Tibial artery (tissue), 4 donors: ENCODE measurements at regions of chr4 and their contacts with region 1.

Region 1: GRCh38 chr4:88456757-88457306 is at the start of gene HERC5:
- DNase-seq: peak; percentile 90 to 96
- H3K4me3 ChIP-seq: peak within 1 kb of the TSS; percentile 93 to 97
- H3K27ac ChIP-seq: peak within 1 kb of the TSS; percentile 88 to 90
- H3K4me1 ChIP-seq: peaks cover 0 to 5% (median 2%) of the 10 kb centered on the region in 4 donors
- H3K27me3 ChIP-seq: no peaks in the 10 kb centered on the region
- CTCF ChIP-seq: peak; percentile 61 to 67

Region 2: DNA sequence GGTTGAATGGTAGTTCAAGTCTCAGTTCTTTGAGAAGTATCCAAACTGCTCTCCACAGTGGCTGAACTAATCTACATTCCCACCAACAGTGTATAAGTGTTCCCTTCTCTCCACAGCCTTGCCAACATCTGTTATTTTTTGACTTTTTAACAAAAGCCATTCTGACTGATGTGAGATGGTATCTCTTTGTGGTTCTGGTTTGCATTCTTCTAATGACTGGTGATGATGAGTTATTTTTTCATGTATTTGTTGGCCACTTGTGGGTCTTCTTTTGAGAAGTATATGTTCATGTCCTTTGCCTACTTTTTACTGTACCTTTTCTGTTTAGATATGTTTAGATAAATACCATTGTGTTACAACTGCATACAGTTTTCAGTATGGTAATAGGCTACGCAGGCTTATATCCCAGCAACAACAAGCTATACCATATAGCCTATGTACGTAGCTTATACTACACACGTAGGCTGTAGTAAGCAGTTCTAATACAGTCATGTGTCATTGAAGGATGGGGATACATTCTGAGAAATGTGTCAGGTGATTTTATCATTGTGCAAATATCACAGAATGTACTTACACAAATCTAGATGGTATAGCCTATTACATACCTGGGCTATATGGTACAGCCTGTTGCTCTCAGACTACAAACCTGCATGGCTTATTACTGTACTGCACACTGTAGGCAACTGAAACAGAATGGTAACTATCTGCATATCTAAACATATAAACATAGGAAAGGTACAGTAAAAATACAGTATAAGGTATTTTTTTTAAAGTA is 1264.5 kb before region 1 on chr4:
- intact Hi-C with region 1: no loop called
- DNase-seq: no peak
- H3K4me3 ChIP-seq: no peak overlapping the region
- H3K27ac ChIP-seq: no peak overlapping the region
- H3K4me1 ChIP-seq: no peaks in the 10 kb centered on the region
- H3K27me3 ChIP-seq: no peaks in the 10 kb centered on the region
- CTCF ChIP-seq: no peak

Region 3: DNA sequence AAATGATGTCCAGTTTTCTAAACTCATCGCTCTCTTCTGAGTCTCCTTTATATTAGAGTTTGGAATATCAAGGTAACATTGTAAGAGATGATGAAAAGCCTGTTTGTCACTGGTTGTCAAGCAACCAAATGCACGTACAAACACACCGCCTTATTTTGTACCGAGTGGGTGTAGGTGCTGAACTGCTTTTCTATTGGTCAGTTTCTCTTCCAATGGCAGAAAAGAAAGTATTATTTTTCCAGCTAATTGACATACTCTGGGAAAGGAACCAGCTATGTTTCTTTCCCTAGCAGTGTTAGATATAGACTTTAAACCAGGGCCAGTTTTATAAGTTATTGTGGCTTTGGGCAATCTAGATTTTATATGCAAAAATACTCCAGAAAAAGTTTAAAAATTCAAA is 165.8 kb before region 1 on chr4:
- intact Hi-C with region 1: loop called (anchors 10 kb)
- DNase-seq: no peak
- H3K4me3 ChIP-seq: peak overlapping the region in 1 of 2 donors; percentile 13
- H3K27ac ChIP-seq: peak overlapping the region; percentile 67 to 77
- H3K4me1 ChIP-seq: peaks cover 0 to 32% (median 14%) of the 10 kb centered on the region in 4 donors
- H3K27me3 ChIP-seq: no peaks in the 10 kb centered on the region
- CTCF ChIP-seq: no peak

Region 4: GRCh38 chr4:88366460-88366859 is 90.4 kb before region 1 on chr4:
- intact Hi-C with region 1: no loop called
- DNase-seq: no peak
- H3K4me3 ChIP-seq: no peak overlapping the region
- H3K27ac ChIP-seq: no peak overlapping the region
- H3K4me1 ChIP-seq: no peaks in the 10 kb centered on the region
- H3K27me3 ChIP-seq: no peaks in the 10 kb centered on the region
- CTCF ChIP-seq: no peak

Region 5: DNA sequence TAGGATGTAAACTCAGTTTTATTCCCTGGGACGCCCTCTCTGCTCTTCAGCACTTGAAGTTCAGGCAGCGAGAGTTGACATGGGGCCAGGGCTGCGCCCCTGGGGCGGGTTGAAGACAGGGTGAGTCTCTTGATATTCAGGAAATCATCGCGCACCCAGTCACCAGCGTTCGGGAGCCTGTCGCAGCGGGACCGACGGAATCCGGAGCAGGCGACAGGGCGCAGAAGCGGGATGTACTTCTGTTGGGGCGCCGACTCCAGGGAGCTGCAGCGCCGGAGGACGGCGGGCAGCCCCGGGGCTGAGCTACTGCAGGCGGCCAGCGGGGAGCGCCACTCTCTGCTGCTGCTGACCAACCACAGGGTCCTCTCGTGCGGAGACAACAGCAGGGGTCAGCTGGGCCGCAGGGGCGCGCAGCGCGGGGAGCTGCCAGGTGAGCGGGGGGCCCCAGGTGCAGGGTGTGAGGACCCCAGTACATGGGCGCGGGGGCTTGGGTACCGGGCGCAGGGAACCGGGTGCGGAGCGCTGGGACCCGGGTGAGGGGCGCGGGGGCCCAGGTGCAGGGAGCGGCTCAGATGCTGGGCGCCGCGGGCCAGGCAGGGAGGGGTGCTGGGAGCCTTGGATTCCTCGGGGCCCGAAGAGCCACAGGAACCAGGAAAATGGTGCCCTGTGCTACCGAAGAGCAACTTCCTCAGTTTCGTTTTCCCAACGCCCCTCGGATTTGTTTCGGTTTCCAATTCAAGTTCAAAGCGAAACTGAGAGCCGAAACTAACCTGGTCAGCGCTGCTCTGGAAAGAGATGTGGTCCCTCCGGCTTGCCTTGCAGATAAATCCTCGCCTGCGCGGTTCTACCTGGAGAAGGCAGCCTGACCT is 77.9 kb before region 1 on chr4 and contains the start of gene HERC6:
- intact Hi-C with region 1: loop called (anchors 5 kb)
- DNase-seq: peak; percentile 65 to 81
- H3K4me3 ChIP-seq: peak within 1 kb of the TSS; percentile 97
- H3K27ac ChIP-seq: peak within 1 kb of the TSS; percentile 85 to 91
- H3K4me1 ChIP-seq: no peaks in the 10 kb centered on the region
- H3K27me3 ChIP-seq: no peaks in the 10 kb centered on the region
- CTCF ChIP-seq: peak; percentile 64 to 67

Region 6: DNA sequence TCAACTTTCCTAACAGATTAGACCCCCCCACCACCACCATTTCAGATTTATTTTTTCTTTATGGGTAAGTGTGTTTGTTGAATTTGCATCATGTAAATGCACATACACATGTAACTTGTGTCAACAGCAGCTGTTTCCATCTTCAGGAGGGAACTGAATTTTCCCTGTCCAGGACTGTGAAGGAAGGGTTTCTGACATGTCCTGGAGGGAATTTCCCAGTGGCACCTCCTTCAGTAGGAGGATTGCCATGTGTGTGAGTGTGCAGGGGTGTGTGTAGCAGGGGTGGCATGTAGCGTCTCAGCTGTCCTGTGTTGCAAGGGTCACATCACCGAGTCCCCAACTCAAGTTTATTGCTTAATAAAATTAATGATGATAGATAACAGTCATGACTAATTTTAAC is 58.5 kb before region 1 on chr4:
- intact Hi-C with region 1: no loop called
- DNase-seq: no peak
- H3K4me3 ChIP-seq: no peak overlapping the region
- H3K27ac ChIP-seq: no peak overlapping the region
- H3K4me1 ChIP-seq: no peaks in the 10 kb centered on the region
- H3K27me3 ChIP-seq: no peaks in the 10 kb centered on the region
- CTCF ChIP-seq: no peak

Region 7: DNA sequence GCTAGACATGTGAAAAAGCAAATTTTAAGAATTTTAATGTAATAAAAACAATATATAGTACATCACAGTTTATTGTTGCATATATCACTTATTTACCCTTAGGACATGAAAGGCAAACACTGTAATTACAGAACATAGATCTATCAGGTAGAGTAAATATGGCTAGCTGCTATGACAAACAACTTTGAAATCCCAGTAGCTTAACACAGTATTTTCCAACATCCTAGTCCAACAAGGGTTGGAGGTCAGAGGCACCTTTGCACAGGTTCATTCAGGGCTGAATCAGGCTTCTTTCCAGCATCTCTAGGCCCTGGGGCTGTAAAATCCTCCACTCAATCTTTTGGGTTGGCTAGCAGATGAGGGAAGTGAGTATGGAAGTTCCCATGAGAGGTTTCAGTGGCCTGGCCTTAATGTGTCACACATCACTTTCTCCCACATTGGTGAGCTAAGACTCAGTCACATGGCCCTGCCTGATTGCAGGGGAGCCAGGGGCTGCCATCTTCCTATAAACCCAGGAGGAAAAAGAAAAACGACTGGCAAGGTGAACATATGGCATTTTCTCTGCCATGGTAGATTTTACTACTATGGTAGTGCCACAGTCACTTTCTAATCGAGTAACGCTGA is 45.2 kb before region 1 on chr4:
- intact Hi-C with region 1: no loop called
- DNase-seq: no peak
- H3K4me3 ChIP-seq: no peak overlapping the region
- H3K27ac ChIP-seq: no peak overlapping the region
- H3K4me1 ChIP-seq: no peaks in the 10 kb centered on the region
- H3K27me3 ChIP-seq: no peaks in the 10 kb centered on the region
- CTCF ChIP-seq: no peak

Region 8: DNA sequence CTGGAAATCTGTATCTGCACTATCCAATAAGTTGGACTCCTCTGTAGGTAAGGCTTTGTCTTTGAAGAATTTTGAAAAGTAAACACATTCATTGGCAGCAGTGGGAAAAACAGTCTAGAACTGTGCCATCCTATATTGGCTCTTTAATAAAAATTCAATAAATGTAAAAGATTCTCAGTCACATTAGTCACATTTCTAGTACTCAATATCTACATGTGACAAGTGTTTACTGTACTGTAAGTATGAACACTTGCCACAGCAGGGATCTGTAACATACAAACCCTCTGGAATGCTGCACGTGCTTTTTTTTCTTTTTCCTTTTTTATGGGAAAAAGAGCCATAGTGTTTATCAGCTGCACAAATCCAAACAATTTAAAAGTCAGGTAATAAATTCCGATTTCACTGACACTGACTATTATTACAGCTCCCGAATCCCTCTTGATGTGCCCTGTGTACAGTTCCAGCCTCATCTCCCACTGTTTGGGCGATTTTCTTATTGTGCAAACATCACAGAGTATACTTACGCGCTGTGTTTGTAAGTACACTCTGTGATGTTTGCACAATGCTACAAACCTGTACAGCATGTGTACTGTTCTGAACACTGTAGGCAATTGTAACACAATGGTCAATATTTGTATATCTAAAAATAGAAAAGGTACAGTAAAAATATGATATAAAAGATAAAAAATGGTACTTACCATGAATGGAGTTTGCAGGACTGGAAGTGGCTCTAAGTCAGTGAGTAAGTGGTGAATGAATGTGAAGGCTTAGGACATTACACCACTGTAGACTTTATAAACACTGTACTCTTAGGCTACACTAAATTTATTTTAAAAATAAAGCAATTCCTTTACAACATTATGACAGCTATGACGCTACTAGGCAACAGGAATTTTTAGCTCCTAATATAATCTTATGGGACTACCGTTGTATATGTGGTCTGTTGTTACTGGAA is 58.0 kb after region 1 on chr4:
- intact Hi-C with region 1: loop called (anchors 10 kb)
- DNase-seq: no peak
- H3K4me3 ChIP-seq: no peak overlapping the region
- H3K27ac ChIP-seq: no peak overlapping the region
- H3K4me1 ChIP-seq: peaks cover 0 to 3% (median 1%) of the 10 kb centered on the region in 4 donors
- H3K27me3 ChIP-seq: no peaks in the 10 kb centered on the region
- CTCF ChIP-seq: no peak

Region 9: DNA sequence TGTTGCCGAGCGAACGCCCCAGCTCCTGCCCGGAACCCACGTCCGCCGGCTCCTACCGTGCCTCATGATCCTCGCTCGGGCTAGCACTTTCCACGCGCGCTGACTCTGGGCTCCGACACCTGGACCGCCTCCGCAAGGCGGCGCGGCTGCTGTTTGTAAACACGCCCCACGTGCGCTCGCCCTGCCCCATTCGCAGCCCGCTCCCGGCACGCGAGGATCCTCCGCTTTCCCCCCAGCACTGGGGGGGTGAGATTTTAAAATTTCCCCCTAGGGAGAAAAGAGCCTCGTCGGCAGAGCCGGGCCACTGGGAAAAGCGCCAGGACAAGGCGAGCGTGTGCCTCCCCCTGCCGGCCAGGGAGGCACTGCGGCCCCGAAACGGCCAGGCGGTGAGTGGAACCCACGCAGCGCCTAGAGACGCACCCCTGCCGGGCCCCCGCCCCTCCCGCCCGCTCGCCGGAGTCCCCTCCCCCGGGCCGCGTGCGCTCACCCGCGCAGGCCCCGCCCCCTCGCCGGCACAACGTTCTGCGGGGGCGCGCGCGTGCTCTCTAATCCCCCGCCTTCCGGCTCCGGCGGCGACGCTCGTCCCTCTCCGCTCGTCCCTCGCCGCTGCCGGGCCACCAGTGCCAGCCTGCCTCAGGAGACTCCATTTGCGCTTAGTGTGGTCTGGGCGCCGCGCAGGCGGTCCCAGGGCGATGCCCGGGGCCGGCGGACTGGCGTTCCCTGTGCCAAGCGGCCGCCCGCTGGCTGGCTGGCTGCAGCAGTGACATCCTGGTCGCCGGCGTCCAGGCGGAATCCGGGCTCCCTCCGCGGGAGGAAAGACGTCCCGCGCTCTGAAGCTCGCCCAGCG is 654.4 kb after region 1 on chr4 and contains the start of gene TIGD2:
- intact Hi-C with region 1: loop called (anchors 5 kb)
- DNase-seq: peak; percentile 80 to 93
- H3K4me3 ChIP-seq: peak within 1 kb of the TSS; percentile 67 to 76
- H3K27ac ChIP-seq: peak within 1 kb of the TSS; percentile 76 to 79
- H3K4me1 ChIP-seq: peaks cover 0 to 20% (median 9%) of the 10 kb centered on the region in 4 donors
- H3K27me3 ChIP-seq: no peaks in the 10 kb centered on the region
- CTCF ChIP-seq: peak; percentile 81 to 86